Activated CD4-positive, alpha-beta T cell treated with anti-CD3 and anti-CD28 coated beads for 36 hours (primary cell): ENCODE measurements at regions of chr18 and their contacts with region 1.

Region 1: GRCh38 chr18:56709463-56709862 is 58.3 kb downstream of the WDR7 start:
- DNase-seq: peak; percentile 32
- ATAC-seq: peak; percentile 100
- H3K4me3 Mint-ChIP-seq: no peak overlapping the region
- H3K27ac Mint-ChIP-seq: no peak overlapping the region
- H3K4me1 Mint-ChIP-seq: peaks cover 11% of the 10 kb centered on the region
- H3K27me3 Mint-ChIP-seq: no peaks in the 10 kb centered on the region

Region 2: GRCh38 chr18:55415258-55415871 is 1294.1 kb before region 1 on chr18:
- CTCF ChIA-PET with region 1: no interaction called
- POLR2A ChIA-PET with region 1: no interaction called
- intact Hi-C with region 1: loop called in 1 of 2 experiments (anchors 10 kb)
- DNase-seq: peak; percentile 89
- ATAC-seq: peak; percentile 74
- H3K4me3 Mint-ChIP-seq: no peak overlapping the region
- H3K27ac Mint-ChIP-seq: no peak overlapping the region
- H3K4me1 Mint-ChIP-seq: peaks cover 5% of the 10 kb centered on the region
- H3K27me3 Mint-ChIP-seq: peaks cover 4% of the 10 kb centered on the region

Region 3: DNA sequence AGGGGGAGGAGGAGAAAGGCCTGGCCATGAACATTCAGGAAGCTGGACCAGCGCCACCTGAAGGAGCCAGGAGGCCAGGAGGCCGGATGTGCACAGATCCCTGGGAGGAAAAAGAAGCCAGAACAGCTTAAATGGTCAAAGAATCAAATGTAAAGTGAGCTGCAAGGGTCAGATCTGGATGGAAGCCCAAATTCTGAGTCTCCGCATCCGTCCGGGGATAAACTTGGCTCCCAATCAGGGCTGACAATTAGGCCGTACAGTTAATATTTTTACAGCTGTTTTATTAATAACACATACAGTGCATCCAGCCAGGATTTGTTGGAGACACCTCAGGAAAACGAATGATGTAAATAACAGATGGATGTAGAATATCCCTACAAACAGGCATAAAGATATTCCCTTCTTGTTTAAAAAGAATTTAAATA is 626.4 kb before region 1 on chr18:
- CTCF ChIA-PET with region 1: no interaction called
- POLR2A ChIA-PET with region 1: no interaction called
- intact Hi-C with region 1: no loop called
- DNase-seq: no peak
- ATAC-seq: no peak
- H3K4me3 Mint-ChIP-seq: no peak overlapping the region
- H3K27ac Mint-ChIP-seq: no peak overlapping the region
- H3K4me1 Mint-ChIP-seq: no peaks in the 10 kb centered on the region
- H3K27me3 Mint-ChIP-seq: no peaks in the 10 kb centered on the region

Region 4: GRCh38 chr18:56511996-56512395 is 197.5 kb before region 1 on chr18:
- CTCF ChIA-PET with region 1: no interaction called
- POLR2A ChIA-PET with region 1: no interaction called
- intact Hi-C with region 1: loop called in 1 of 2 experiments (anchors 10 kb)
- DNase-seq: no peak
- ATAC-seq: no peak
- H3K4me3 Mint-ChIP-seq: no peak overlapping the region
- H3K27ac Mint-ChIP-seq: no peak overlapping the region
- H3K4me1 Mint-ChIP-seq: peaks cover 6% of the 10 kb centered on the region
- H3K27me3 Mint-ChIP-seq: peaks cover 3% of the 10 kb centered on the region

Region 5: GRCh38 chr18:56532176-56532840 is 177.2 kb before region 1 on chr18:
- CTCF ChIA-PET with region 1: no interaction called
- POLR2A ChIA-PET with region 1: no interaction called
- intact Hi-C with region 1: loop called in 1 of 2 experiments (anchors 1 kb)
- DNase-seq: peak; percentile 62
- ATAC-seq: peak; percentile 97
- H3K4me3 Mint-ChIP-seq: no peak overlapping the region
- H3K27ac Mint-ChIP-seq: no peak overlapping the region
- H3K4me1 Mint-ChIP-seq: peaks cover 6% of the 10 kb centered on the region
- H3K27me3 Mint-ChIP-seq: peaks cover 13% of the 10 kb centered on the region

Region 6: GRCh38 chr18:56638271-56639093 is 71.0 kb before region 1 on chr18 and contains the start of gene TXNL1:
- CTCF ChIA-PET with region 1: interaction called, 4 read pairs
- POLR2A ChIA-PET with region 1: no interaction called
- intact Hi-C with region 1: loop called in 1 of 2 experiments (anchors 1 kb)
- DNase-seq: peak; percentile 100
- ATAC-seq: peak; percentile 98
- H3K4me3 Mint-ChIP-seq: peak within 1 kb of the TSS; percentile 98
- H3K27ac Mint-ChIP-seq: peak within 1 kb of the TSS; percentile 96
- H3K4me1 Mint-ChIP-seq: peaks cover 41% of the 10 kb centered on the region
- H3K27me3 Mint-ChIP-seq: no peaks in the 10 kb centered on the region
- total RNA-seq, gene TXNL1: 75.3 to 87.0 TPM

Region 7: DNA sequence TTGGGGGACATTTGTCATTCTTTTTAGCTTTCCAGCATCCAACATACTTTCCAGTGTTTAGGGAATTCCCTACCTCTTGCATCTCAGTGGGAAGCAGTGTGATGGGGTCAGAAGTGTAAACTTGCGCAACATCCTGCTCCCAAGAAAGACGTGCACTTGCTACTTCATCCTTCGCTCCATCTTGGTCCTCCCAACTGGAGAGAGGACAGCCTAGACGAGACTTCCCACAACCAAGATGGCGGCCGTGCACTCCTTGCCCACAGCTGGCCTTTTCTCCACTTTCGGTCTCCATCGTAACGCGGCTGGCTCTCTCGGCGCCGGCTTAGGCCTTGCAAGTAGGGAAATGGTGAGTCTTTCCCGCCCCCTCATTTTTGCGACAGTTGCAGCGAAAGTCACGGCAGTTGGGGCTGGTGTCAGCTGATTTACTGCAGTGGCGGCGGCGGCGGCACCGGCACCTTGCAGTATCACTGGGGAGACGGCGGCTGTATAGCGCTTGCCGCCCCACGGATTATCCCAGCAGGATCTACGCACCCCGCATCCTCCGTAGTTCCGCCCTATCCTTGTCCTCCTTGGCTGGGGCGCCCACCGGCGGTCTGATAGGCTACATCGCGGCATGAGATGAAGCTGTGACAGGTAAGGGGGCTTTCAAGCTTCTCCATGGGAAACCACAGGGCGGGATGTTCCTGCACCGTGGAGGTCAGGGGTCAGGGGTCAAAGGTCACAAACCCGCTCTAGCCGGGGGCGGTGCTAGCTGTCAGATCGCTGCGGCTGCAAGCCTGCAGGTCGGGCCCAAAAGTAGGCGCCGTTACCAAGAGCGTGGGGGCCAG is 58.3 kb before region 1 on chr18 and contains the start of gene WDR7:
- CTCF ChIA-PET with region 1: interaction called, 5 read pairs
- POLR2A ChIA-PET with region 1: interaction called, 3 read pairs
- intact Hi-C with region 1: loop called in 1 of 2 experiments (anchors 1 kb)
- DNase-seq: peak; percentile 98
- ATAC-seq: peak; percentile 93
- H3K4me3 Mint-ChIP-seq: peak within 1 kb of the TSS; percentile 89
- H3K27ac Mint-ChIP-seq: peak within 1 kb of the TSS; percentile 90
- H3K4me1 Mint-ChIP-seq: peaks cover 42% of the 10 kb centered on the region
- H3K27me3 Mint-ChIP-seq: no peaks in the 10 kb centered on the region
- total RNA-seq, gene WDR7: 21.5 to 23.1 TPM

Region 8: DNA sequence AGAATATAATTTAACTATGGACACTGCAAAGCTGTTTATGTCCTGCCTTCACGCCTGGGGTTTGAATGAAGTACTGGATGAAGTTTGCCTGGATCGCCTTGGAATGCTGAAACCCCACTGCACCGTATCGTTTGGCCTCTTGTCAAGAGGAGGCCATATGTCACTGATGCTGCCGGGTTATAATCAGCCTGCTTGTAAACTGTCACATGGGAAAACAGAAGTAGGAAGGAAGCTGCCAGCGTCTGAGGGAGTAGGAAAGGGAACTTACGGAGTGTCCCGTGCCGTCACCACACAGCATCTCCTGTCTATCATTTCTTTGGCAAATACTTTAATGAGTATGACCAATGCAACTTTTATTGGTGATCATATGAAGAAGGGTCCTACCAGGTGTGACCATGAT is 47.5 kb after region 1 on chr18:
- CTCF ChIA-PET with region 1: no interaction called
- POLR2A ChIA-PET with region 1: no interaction called
- intact Hi-C with region 1: no loop called
- DNase-seq: no peak
- ATAC-seq: no peak
- H3K4me3 Mint-ChIP-seq: no peak overlapping the region
- H3K27ac Mint-ChIP-seq: no peak overlapping the region
- H3K4me1 Mint-ChIP-seq: no peaks in the 10 kb centered on the region
- H3K27me3 Mint-ChIP-seq: no peaks in the 10 kb centered on the region

Region 9: DNA sequence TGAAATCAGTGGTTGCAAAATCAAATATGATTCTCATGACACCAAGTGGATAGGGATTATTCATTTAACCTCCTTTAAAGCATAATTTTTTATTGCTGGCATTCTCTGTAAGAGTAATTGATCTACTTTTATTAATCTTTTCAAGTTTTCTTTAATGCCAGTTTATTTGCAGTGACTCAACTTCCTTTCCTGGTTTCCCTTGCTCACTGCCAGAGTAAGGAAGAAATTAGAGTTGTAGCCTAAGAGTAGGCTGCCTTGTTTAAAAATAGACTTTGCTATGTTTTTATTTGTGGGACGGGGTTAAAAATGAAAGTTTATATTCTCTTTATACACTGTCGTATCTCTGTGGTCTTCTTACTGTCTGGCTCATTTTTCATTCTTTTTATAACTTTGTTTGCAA is 90.3 kb after region 1 on chr18:
- CTCF ChIA-PET with region 1: no interaction called
- POLR2A ChIA-PET with region 1: no interaction called
- intact Hi-C with region 1: no loop called
- DNase-seq: no peak
- ATAC-seq: no peak
- H3K4me3 Mint-ChIP-seq: no peak overlapping the region
- H3K27ac Mint-ChIP-seq: no peak overlapping the region
- H3K4me1 Mint-ChIP-seq: no peaks in the 10 kb centered on the region
- H3K27me3 Mint-ChIP-seq: no peaks in the 10 kb centered on the region